Transverse colon (tissue), 4 donors: ENCODE measurements at regions of chr10 and their contacts with region 1.

Region 1: GRCh38 chr10:3785257-3785850 is 345 bp upstream of the KLF6 start:
- DNase-seq: peak; percentile 99
- H3K4me3 ChIP-seq: peak overlapping the region; percentile 63 to 98 (median 96)
- H3K27ac ChIP-seq: peak overlapping the region; percentile 99 to 100 (median 100)
- H3K4me1 ChIP-seq: peaks cover 0 to 28% (median 26%) of the 10 kb centered on the region in 4 donors
- H3K27me3 ChIP-seq: no peaks in the 10 kb centered on the region
- CTCF ChIP-seq: peak in 1 of 5 experiments; percentile 8
- EP300 ChIP-seq: peak; percentile 49
- POLR2A ChIP-seq: peak; percentile 98

Region 2: DNA sequence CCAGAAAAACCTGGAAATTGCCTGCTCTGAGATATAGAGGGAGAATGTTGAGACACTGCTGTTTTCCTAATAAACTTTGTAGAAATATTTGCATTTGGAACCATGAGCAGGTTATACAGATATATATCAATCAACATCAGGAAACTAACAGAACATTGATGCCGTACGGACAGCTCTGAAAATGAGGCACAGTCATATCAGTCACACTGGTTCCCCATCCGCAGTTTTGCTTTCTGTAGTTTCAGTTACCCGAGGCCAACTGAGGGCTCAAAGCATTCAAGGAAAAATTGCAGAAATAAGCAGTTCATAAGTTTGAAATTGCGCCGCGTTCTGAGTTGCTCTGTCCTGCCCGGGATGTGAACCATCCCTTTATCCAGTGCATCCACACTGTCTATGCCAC is 138.3 kb before region 1 on chr10:
- in situ Hi-C with region 1: no loop called
- intact Hi-C with region 1: no loop called
- DNase-seq: no peak
- H3K4me3 ChIP-seq: no peak overlapping the region
- H3K27ac ChIP-seq: no peak overlapping the region
- H3K4me1 ChIP-seq: no peaks in the 10 kb centered on the region
- H3K27me3 ChIP-seq: no peaks in the 10 kb centered on the region
- CTCF ChIP-seq: no peak
- EP300 ChIP-seq: no peak
- POLR2A ChIP-seq: no peak

Region 3: GRCh38 chr10:3852147-3852904 is 67.0 kb after region 1 on chr10:
- in situ Hi-C with region 1: loop called in 1 of 4 experiments (anchors 10 kb)
- intact Hi-C with region 1: no loop called
- DNase-seq: peak; percentile 88
- H3K4me3 ChIP-seq: peak overlapping the region in 1 of 4 donors; percentile 5
- H3K27ac ChIP-seq: peak overlapping the region; percentile 88 to 93 (median 92)
- H3K4me1 ChIP-seq: peaks cover 32 to 43% (median 38%) of the 10 kb centered on the region in 4 donors
- H3K27me3 ChIP-seq: no peaks in the 10 kb centered on the region
- CTCF ChIP-seq: no peak
- EP300 ChIP-seq: peak; percentile 93
- POLR2A ChIP-seq: peak; percentile 49

Region 4: DNA sequence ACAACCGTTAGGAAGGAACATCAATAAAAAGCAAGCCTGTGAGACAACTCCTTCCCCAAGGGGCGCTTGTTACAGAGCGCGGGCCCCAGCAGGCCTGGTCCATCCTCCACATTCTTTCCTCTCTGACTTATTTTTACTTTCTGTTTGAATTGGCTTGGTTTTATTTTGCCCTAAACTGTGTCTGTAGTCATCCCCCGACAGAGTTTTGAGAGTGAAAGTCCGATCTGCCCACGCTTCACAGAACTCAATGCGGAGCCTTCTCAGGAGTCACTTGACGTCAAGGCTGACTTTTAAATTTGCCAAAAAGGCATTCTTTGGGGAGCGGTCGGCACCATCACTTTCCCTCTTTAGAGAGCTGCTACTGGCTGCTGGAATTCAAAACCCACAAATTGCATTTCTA is 149.8 kb after region 1 on chr10:
- in situ Hi-C with region 1: no loop called
- intact Hi-C with region 1: loop called (anchors 10 kb)
- DNase-seq: no peak
- H3K4me3 ChIP-seq: peak overlapping the region in 1 of 4 donors; percentile 5
- H3K27ac ChIP-seq: peak overlapping the region; percentile 83 to 87 (median 84)
- H3K4me1 ChIP-seq: peaks cover 5 to 36% (median 21%) of the 10 kb centered on the region in 4 donors
- H3K27me3 ChIP-seq: no peaks in the 10 kb centered on the region
- CTCF ChIP-seq: no peak
- EP300 ChIP-seq: no peak
- POLR2A ChIP-seq: no peak

Region 5: DNA sequence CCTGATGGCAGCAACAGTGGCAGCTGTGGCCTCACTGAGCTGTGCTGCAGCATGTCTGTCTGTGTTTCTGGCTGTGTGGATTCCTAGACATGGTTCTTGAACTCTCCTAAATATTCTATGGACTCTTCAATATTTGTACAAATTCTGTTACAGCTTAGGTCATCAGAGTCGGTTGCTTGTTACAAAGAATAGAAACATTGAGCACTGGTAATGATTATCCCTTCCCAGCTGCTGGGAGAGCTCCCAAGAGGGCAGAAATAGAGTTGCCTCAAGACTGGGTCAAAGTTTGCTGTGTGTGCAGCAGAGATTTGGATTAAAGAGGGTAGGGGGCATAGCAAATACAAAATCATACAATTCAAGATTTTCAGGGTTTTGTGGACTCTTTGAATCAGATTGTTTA is 703.5 kb after region 1 on chr10:
- in situ Hi-C with region 1: no loop called
- intact Hi-C with region 1: no loop called
- DNase-seq: no peak
- H3K4me3 ChIP-seq: no peak overlapping the region
- H3K27ac ChIP-seq: no peak overlapping the region
- H3K4me1 ChIP-seq: no peaks in the 10 kb centered on the region
- H3K27me3 ChIP-seq: no peaks in the 10 kb centered on the region
- CTCF ChIP-seq: no peak
- EP300 ChIP-seq: no peak
- POLR2A ChIP-seq: no peak

Region 6: DNA sequence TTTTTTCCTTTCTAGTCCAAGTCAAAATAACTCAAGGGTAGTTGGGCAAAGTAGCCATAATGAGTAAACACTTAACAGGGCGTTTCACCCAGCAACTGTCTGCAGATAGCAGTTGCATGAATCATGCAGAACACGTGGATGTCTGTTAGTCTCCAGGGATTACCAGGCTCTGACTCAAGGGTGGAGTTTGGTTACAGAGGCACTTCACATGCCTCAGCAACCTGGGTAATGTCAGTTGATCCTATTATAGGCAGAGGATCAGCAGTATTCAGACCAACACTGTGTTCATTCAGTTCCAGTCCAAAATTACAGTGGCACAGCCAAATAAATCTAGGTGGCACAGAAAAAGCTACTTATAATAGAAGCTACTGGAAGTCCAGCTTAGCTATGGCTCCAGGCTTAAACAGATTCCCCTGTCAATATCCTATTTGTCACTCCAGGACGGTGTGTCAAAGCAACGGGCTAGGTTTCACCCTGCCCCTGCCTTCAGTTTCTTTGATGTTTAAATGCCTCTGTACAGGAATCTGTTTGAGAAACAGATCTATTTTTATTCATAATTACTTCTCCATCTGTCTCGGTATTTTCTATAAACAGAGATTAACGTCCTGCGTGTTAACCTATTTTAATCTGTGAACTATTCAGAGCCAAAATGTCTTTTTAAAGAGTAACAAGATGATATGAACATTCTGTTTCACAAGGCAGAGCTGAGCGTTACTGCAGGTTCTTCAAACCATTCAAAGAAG is 878.0 kb after region 1 on chr10:
- in situ Hi-C with region 1: loop called in 1 of 4 experiments (anchors 25 kb)
- intact Hi-C with region 1: loop called (anchors 10 kb)
- DNase-seq: peak; percentile 77
- H3K4me3 ChIP-seq: no peak overlapping the region
- H3K27ac ChIP-seq: peak overlapping the region; percentile 89 to 90 (median 90)
- H3K4me1 ChIP-seq: peaks cover 25 to 46% (median 33%) of the 10 kb centered on the region in 4 donors
- H3K27me3 ChIP-seq: no peaks in the 10 kb centered on the region
- CTCF ChIP-seq: no peak
- EP300 ChIP-seq: peak; percentile 96
- POLR2A ChIP-seq: peak; percentile 57